IMR-90 (cell line): ENCODE measurements at regions of chr22 and their contacts with region 1.

Region 1: GRCh38 chr22:43385770-43386641 is 25.8 kb upstream of the MPPED1 start:
- DNase-seq: peak; percentile 65
- ATAC-seq: peak; percentile 98
- H3K4me3 ChIP-seq: no peak overlapping the region
- H3K27ac ChIP-seq: no peak overlapping the region
- H3K4me1 ChIP-seq: no peaks in the 10 kb centered on the region; the same call in 1 of the 2 replicates
- H3K27me3 ChIP-seq: peaks cover 23% of the 10 kb centered on the region
- CTCF ChIP-seq: peak; percentile 93
- POLR2A ChIP-seq: peak; percentile 47; the same call in 1 of the 2 replicates
- RAD21 ChIP-seq: peak; percentile 97

Region 2: DNA sequence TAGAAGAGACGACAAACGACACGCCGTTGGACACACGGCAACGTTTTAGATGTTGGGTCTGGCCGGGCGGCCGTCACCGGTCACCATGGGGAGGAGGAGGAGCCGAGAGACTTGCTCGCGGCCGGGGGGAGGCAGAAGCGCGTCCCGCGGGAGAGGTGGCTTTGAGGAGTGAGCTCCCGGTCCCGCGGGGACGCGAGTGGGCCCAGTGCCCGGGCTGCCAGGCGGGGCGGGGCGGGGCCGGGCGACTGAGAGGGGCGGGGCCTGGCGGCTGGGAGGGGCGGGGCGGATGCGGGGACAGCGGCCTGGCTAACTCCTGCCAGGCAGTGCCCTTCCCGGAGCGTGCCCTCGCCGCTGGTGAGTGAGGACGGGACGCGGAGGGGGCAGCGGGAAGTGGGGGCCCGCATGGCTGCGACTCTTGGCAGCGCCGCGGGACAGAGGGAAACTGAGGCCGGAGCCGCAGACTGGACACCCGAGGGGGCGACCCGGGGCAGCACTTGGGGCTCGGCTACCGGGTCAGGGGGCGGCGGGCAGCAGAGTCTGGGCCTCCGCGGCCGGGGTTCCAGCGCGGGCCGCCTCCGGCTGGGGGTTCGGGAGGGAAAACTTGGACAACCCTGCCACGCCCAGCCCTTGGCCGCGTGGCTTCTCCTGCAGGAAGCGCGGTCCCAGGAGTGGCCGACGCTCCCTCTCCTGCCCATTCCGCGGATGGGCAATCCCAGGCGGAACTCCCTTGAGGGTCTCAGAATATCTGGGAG is 234.6 kb before region 1 on chr22 and contains the start of gene TSPO:
- CTCF ChIA-PET with region 1: no interaction called
- POLR2A ChIA-PET with region 1: no interaction called
- dilution Hi-C with region 1: no loop called
- in situ Hi-C with region 1: no loop called
- intact Hi-C with region 1: no loop called
- DNase-seq: peak; percentile 19
- ATAC-seq: peak; percentile 85
- H3K4me3 ChIP-seq: peak within 1 kb of the TSS; percentile 76
- H3K27ac ChIP-seq: peak within 1 kb of the TSS; percentile 82
- H3K4me1 ChIP-seq: peaks cover 10% of the 10 kb centered on the region
- H3K27me3 ChIP-seq: no peaks in the 10 kb centered on the region
- CTCF ChIP-seq: no peak
- POLR2A ChIP-seq: no peak
- RAD21 ChIP-seq: no peak
- total RNA-seq, gene TSPO: 94.7 and 115 TPM in 2 replicates

Region 3: DNA sequence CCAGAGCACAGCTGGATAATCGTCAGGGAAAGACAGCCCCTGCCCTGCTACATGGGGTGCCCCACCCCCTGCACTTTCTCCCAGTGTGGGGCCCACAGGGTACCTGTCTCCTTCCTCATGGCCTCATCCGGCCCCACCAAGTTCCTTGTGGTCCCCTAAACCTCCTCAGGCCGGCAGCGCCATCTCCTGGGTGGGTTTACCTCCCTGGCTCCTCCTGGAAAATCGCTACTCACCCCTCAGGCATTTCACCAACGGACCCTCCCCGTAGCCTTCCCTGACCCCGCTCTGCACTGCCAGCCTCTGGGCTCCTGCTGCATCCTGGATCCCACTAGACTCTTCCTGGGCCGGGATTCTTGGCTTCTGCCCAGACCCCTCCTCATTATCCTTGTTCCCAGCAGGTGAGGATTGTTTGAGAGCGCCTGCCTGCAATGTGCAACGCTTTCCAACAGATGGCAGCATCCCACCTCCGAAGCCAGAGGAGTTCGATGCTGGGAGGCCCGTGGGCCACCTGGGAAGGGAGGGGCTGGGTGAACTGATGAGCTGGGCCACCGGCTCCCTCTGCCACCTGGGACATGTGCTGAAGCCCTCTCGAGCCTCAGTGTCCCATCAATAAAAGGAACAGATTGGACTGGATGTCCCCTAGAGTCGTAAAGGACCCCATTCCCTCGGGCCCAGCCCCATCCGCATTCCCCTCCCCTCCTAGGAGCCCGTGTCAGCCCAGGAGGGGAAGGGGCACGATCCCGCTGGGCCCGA is 154.9 kb before region 1 on chr22:
- CTCF ChIA-PET with region 1: no interaction called
- POLR2A ChIA-PET with region 1: no interaction called
- dilution Hi-C with region 1: no loop called
- in situ Hi-C with region 1: no loop called
- intact Hi-C with region 1: loop called (anchors 1 kb)
- DNase-seq: peak; percentile 28
- ATAC-seq: peak; percentile 74
- H3K4me3 ChIP-seq: no peak overlapping the region
- H3K27ac ChIP-seq: no peak overlapping the region
- H3K4me1 ChIP-seq: no peaks in the 10 kb centered on the region; the same call in 1 of the 2 replicates
- H3K27me3 ChIP-seq: peaks cover 46% of the 10 kb centered on the region
- CTCF ChIP-seq: peak; percentile 80
- POLR2A ChIP-seq: no peak
- RAD21 ChIP-seq: peak; percentile 81

Region 4: GRCh38 chr22:43796567-43796966 is 410.6 kb after region 1 on chr22:
- CTCF ChIA-PET with region 1: no interaction called
- POLR2A ChIA-PET with region 1: no interaction called
- dilution Hi-C with region 1: no loop called
- in situ Hi-C with region 1: no loop called
- intact Hi-C with region 1: loop called (anchors 1 kb)
- DNase-seq: peak; percentile 81
- ATAC-seq: peak; percentile 89
- H3K4me3 ChIP-seq: no peak overlapping the region
- H3K27ac ChIP-seq: no peak overlapping the region
- H3K4me1 ChIP-seq: no peaks in the 10 kb centered on the region
- H3K27me3 ChIP-seq: no peaks in the 10 kb centered on the region; the same call in 1 of the 2 replicates
- CTCF ChIP-seq: peak; percentile 74
- POLR2A ChIP-seq: no peak
- RAD21 ChIP-seq: peak; percentile 80

Region 5: GRCh38 chr22:43884600-43885325 is 498.8 kb after region 1 on chr22:
- CTCF ChIA-PET with region 1: no interaction called
- POLR2A ChIA-PET with region 1: no interaction called
- dilution Hi-C with region 1: no loop called
- in situ Hi-C with region 1: no loop called
- intact Hi-C with region 1: loop called (anchors 1 kb)
- DNase-seq: peak; percentile 31
- ATAC-seq: peak; percentile 82
- H3K4me3 ChIP-seq: no peak overlapping the region
- H3K27ac ChIP-seq: no peak overlapping the region
- H3K4me1 ChIP-seq: no peaks in the 10 kb centered on the region
- H3K27me3 ChIP-seq: peaks cover 5% of the 10 kb centered on the region; the same call in 1 of the 2 replicates
- CTCF ChIP-seq: peak; percentile 73
- POLR2A ChIP-seq: no peak
- RAD21 ChIP-seq: peak; percentile 72

Region 6: GRCh38 chr22:44625981-44626687 is 1240.1 kb after region 1 on chr22:
- CTCF ChIA-PET with region 1: no interaction called
- POLR2A ChIA-PET with region 1: no interaction called
- dilution Hi-C with region 1: no loop called
- in situ Hi-C with region 1: loop called (anchors 25 kb)
- intact Hi-C with region 1: no loop called
- DNase-seq: peak; percentile 45
- ATAC-seq: peak; percentile 86
- H3K4me3 ChIP-seq: no peak overlapping the region
- H3K27ac ChIP-seq: no peak overlapping the region
- H3K4me1 ChIP-seq: no peaks in the 10 kb centered on the region
- H3K27me3 ChIP-seq: peaks cover 8% of the 10 kb centered on the region; the same call in 1 of the 2 replicates
- CTCF ChIP-seq: peak; percentile 99
- POLR2A ChIP-seq: peak; percentile 63
- RAD21 ChIP-seq: peak; percentile 100